Right ventricle myocardium superior (tissue), 1 donor: ENCODE measurements at regions of chr10 and their contacts with region 1.

Region 1: GRCh38 chr10:96299383-96299782 is 4.9 kb upstream of the DNTT start:
- DNase-seq: no peak
- ATAC-seq: no peak

Region 2: DNA sequence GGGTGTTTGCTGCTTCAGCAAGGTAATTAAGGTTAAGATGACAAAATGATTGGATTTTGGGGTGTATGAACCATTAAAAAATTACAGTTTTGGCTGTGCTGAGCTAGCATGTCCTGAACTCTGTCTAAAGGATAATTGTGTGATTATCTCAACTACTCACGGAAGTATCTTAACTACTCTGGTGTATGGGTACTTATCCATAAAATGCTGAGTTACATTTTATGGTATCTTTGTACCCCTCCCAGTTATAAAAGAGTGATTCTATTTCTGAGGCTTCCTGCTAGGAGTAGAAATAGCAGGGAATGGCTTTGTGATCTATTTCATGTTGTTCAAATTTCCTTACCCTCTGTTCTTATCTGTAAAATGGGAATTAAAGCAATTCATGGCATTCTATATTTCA is 1593.3 kb before region 1 on chr10:
- intact Hi-C with region 1: no loop called
- DNase-seq: no peak
- ATAC-seq: no peak

Region 3: GRCh38 chr10:96017191-96017687 is 282.1 kb before region 1 on chr10:
- intact Hi-C with region 1: loop called (anchors 5 kb)
- DNase-seq: no peak
- ATAC-seq: peak; percentile 80

Region 4: DNA sequence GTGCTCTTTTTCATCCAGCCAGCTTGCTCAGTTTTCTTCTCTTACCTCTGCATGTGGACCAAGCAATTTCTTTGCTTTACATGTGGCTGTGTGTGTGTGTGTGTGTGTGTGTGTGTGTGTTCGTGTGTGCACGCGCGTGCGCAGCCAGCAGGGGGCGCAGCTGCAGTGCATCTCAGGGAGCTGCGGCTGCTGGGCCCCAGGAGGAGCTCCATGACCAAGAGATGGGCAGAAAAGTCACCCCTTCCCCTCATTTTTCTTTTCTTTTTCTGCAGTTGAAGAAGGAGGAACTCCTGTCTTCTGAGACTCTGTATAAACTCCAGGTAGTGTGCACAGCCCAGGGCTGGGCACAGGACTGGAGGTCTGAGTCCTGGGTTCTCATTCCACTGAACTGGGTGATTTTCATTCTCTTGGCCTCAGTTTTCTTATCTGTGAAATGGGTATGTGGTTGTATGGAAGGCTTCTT is 69.8 kb before region 1 on chr10:
- intact Hi-C with region 1: loop called (anchors 2 kb)
- DNase-seq: peak; percentile 87
- ATAC-seq: peak; percentile 65